CD14-positive monocyte (primary cell): ENCODE measurements at regions of chr20 and their contacts with region 1.

Region 1: GRCh38 chr20:59940174-59940971 is at the starts of genes FAM217B and PPP1R3D:
- DNase-seq: peak; percentile 90 to 91 (median 90)
- H3K4me3 ChIP-seq: peak within 1 kb of the TSS; percentile 79 to 99 (median 95)
- H3K4me3 Mint-ChIP-seq: peak within 1 kb of the TSS; percentile 95 to 97
- H3K27ac ChIP-seq: peak within 1 kb of the TSS; percentile 97 to 98
- H3K27ac Mint-ChIP-seq: peak within 1 kb of the TSS; percentile 97 to 100 (median 98)
- H3K4me1 ChIP-seq: peaks cover 52 to 63% of the 10 kb centered on the region in 2 donors
- H3K4me1 Mint-ChIP-seq: peaks cover 62% of the 10 kb centered on the region
- H3K27me3 ChIP-seq: no peaks in the 10 kb centered on the region
- H3K27me3 Mint-ChIP-seq: no peaks in the 10 kb centered on the region
- CTCF ChIP-seq: no peak
- polyA plus RNA-seq, gene FAM217B: 5.3 to 18.3 (median 18.1) TPM
- polyA plus RNA-seq, gene PPP1R3D: 2.0 to 3.9 (median 3.5) TPM

Region 2: GRCh38 chr20:59985864-59986263 is 45.5 kb after region 1 on chr20:
- intact Hi-C with region 1: no loop called
- DNase-seq: peak; percentile 25 to 49 (median 44)
- H3K4me3 ChIP-seq: no peak overlapping the region
- H3K4me3 Mint-ChIP-seq: no peak overlapping the region
- H3K27ac ChIP-seq: peak overlapping the region in 1 of 2 donors; percentile 84
- H3K27ac Mint-ChIP-seq: peak overlapping the region in 5 of 7 donors; percentile 13 to 98 (median 68)
- H3K4me1 ChIP-seq: peaks cover 37 to 42% of the 10 kb centered on the region in 2 donors
- H3K4me1 Mint-ChIP-seq: peaks cover 44% of the 10 kb centered on the region
- H3K27me3 ChIP-seq: no peaks in the 10 kb centered on the region
- H3K27me3 Mint-ChIP-seq: peaks cover 0 to 2% (median 0%) of the 10 kb centered on the region in 3 donors
- CTCF ChIP-seq: peak; percentile 56

Region 3: GRCh38 chr20:60117065-60117464 is 176.7 kb after region 1 on chr20:
- intact Hi-C with region 1: loop called in 1 of 2 experiments (anchors 10 kb)
- DNase-seq: peak; percentile 67 to 80 (median 67)
- H3K4me3 ChIP-seq: peak overlapping the region; percentile 23 to 69 (median 42)
- H3K4me3 Mint-ChIP-seq: peak overlapping the region; percentile 65 to 84
- H3K27ac ChIP-seq: peak overlapping the region; percentile 72 to 87
- H3K27ac Mint-ChIP-seq: peak overlapping the region; percentile 79 to 91 (median 90)
- H3K4me1 ChIP-seq: peaks cover 66 to 74% of the 10 kb centered on the region in 2 donors
- H3K4me1 Mint-ChIP-seq: peaks cover 72% of the 10 kb centered on the region
- H3K27me3 ChIP-seq: no peaks in the 10 kb centered on the region
- H3K27me3 Mint-ChIP-seq: peaks cover 0 to 5% (median 0%) of the 10 kb centered on the region in 3 donors
- CTCF ChIP-seq: no peak

Region 4: DNA sequence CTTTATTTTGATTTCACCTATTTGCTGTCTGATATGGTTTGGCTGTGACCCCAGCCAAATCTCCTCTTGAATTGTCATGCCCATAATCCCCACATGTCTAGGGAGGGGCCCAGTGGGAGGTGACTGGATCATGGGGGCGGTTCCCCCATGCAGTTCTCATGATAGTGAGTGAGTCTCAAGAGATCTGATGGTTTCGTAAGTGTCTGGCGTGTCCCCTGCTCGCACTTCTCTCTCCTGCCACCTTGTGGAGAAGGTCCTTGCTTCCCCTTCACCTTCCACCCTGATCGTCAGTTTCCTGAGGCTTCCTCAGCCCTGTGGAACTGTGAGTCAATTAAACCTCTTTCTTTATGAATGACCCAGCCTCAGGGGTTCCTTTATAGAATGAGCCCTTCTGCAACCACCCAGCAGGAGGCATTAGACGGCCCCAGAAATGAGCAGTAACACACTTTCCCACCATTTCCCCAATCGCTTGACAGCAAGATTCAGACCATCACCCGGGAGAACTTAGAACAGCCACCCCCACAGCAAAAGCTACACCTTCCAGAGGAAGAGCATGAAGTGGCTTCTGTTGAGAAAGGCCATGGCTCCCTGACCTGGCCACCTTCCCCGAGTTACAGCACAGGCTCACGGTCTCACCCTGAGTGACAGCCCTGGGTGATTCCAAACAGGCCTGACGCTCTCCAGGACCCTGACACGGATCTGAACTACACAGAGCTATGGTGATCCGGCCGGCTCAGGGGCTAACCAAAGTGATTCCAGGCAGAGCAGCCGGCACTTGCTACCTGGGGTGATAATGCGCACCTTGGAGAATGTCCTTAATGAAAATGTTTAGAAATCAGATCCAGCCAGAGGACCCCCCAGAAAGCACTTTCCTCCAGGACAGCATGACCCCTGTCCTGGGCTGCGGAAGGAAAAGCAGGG is 1180.5 kb after region 1 on chr20:
- intact Hi-C with region 1: loop called in 1 of 2 experiments (anchors 10 kb)
- DNase-seq: peak; percentile 46 to 77 (median 60)
- H3K4me3 ChIP-seq: no peak overlapping the region
- H3K4me3 Mint-ChIP-seq: peak overlapping the region in 1 of 2 donors; percentile 72
- H3K27ac ChIP-seq: no peak overlapping the region
- H3K27ac Mint-ChIP-seq: peak overlapping the region in 6 of 7 donors; percentile 13 to 81 (median 51)
- H3K4me1 ChIP-seq: peaks cover 14 to 16% of the 10 kb centered on the region in 2 donors
- H3K4me1 Mint-ChIP-seq: peaks cover 18% of the 10 kb centered on the region
- H3K27me3 ChIP-seq: peaks cover 0 to 11% of the 10 kb centered on the region in 2 donors
- H3K27me3 Mint-ChIP-seq: peaks cover 10 to 23% (median 17%) of the 10 kb centered on the region in 3 donors
- CTCF ChIP-seq: peak; percentile 56